ENCODE measurements at regions of chr17 and their contacts with region 1.

Region 1: GRCh38 chr17:60392042-60392844 is at the start of gene USP32:
- DNase-seq: peak; percentile 94 to 99
- H3K4me3 ChIP-seq: peak within 1 kb of the TSS; percentile 90 to 91
- H3K27ac ChIP-seq: peak within 1 kb of the TSS; percentile 88 to 93
- H3K4me1 ChIP-seq: peaks cover 0 to 17% of the 10 kb centered on the region in 2 donors
- H3K27me3 ChIP-seq: no peaks in the 10 kb centered on the region
- CTCF ChIP-seq: peak in 2 of 3 experiments; percentile 22 to 25
- total RNA-seq, gene USP32: 11.9 TPM

Region 2: DNA sequence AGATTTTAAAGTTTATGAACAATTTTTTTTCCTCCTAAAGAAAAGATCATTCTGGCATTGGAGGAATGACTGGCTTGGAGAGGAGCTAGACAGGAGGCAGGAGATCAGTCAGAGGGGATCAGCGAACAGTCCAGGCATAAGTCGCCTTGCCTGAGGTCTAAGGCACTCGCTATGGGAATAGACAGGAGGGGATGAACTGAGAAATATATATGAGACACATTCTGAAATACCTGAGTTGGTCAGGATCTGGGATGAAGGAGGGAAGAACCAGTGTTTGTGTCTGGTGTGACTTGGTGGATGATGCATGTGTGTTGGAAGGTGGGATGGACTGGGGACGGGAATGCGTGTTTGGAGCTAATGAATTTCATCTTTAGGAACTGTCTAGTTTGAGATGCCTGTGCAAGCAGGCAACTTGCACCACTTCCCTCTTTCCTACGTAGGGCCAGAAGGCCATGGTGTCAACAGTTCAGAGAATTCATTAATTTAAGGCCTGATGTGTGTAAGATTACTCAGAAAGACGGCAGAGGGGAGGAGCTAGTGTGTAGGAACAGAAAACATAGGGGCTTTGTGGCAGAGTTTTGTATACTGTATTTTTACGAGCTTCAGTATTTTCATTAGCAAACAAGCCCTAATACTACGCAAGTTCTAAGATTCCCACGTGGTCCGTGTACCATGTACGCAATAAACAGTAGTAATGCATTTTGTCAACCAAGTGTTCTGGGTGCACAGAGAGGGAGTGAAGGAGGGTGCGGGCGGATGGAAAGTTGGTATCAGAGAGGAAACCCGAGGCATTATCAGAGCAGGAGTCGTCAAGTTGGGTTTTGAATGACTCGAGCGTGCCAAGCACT is 314.3 kb before region 1 on chr17:
- intact Hi-C with region 1: loop called (anchors 1 kb)
- DNase-seq: no peak
- H3K4me3 ChIP-seq: peak overlapping the region; percentile 90 to 92
- H3K27ac ChIP-seq: peak overlapping the region; percentile 68 to 76
- H3K4me1 ChIP-seq: peaks cover 0 to 7% of the 10 kb centered on the region in 2 donors
- H3K27me3 ChIP-seq: no peaks in the 10 kb centered on the region
- CTCF ChIP-seq: no peak

Region 3: GRCh38 chr17:60435244-60436167 is 43.3 kb after region 1 on chr17:
- intact Hi-C with region 1: loop called (anchors 5 kb)
- DNase-seq: peak in 1 of 2 donors; percentile 86
- H3K4me3 ChIP-seq: peak overlapping the region in 1 of 2 donors; percentile 40
- H3K27ac ChIP-seq: peak overlapping the region; percentile 31 to 51
- H3K4me1 ChIP-seq: peaks cover 0 to 4% of the 10 kb centered on the region in 2 donors
- H3K27me3 ChIP-seq: no peaks in the 10 kb centered on the region
- CTCF ChIP-seq: peak; percentile 82 to 91 (median 87)

Region 4: GRCh38 chr17:60599620-60600489 is 207.6 kb after region 1 on chr17 and contains the start of gene PPM1D:
- intact Hi-C with region 1: loop called (anchors 1 kb)
- DNase-seq: peak; percentile 94 to 99
- H3K4me3 ChIP-seq: peak within 1 kb of the TSS; percentile 73 to 94
- H3K27ac ChIP-seq: peak within 1 kb of the TSS; percentile 97 to 98
- H3K4me1 ChIP-seq: peaks cover 0 to 15% of the 10 kb centered on the region in 2 donors
- H3K27me3 ChIP-seq: no peaks in the 10 kb centered on the region
- CTCF ChIP-seq: peak in 1 of 3 experiments; percentile 11
- total RNA-seq, gene PPM1D: 6.0 TPM

Region 5: GRCh38 chr17:60677308-60678124 is 285.3 kb after region 1 on chr17 and contains the start of gene BCAS3:
- intact Hi-C with region 1: loop called (anchors 1 kb)
- DNase-seq: peak; percentile 98 to 99
- H3K4me3 ChIP-seq: peak within 1 kb of the TSS; percentile 71 to 79
- H3K27ac ChIP-seq: peak within 1 kb of the TSS; percentile 63 to 69
- H3K4me1 ChIP-seq: peaks cover 0 to 10% of the 10 kb centered on the region in 2 donors
- H3K27me3 ChIP-seq: no peaks in the 10 kb centered on the region
- CTCF ChIP-seq: no peak
- total RNA-seq, gene BCAS3: 75.9 TPM